ENCODE measurements at regions of chr9 and their contacts with region 1.

Region 1: DNA sequence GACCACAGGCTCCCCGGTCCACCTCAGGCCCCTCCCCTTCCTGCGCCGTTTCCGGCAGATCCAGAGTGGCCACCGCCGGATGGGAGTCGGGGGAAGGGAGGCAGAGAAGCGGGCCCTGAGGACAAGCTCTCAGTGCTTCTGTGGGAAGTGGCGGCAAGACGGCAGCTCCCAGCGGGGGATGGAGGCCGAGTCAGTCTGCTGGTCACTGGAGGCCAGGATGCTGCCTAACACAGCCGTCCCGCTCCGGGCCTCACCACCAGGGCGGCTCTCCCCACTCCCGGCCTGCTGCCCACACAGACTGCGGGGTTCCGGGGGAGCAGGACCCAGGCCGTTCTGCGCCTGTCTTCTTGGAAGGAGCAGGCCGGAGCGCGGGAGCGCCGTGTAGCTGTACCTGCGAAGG is 31.4 kb downstream of the FXN start:
- DNase-seq: no peak

Region 2: DNA sequence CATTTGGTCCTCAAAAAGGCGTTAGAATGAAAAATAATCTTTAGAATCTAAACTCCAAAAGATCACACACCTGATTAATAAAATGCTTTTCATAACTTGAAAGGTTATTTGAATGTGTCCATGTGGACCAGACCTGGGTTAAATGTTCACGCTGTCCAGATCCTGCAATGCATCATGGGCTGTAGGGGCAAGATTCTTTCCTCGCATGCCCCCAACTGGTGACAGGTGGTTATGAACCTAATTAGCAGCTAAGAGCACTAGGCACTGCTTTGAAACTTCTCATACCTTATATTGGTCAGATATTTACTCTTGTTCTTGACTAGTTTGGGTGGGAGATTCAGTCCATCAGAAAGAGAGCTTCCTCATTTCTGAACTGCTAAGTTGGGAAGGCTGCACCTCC is 381.2 kb before region 1 on chr9:
- intact Hi-C with region 1: no loop called
- DNase-seq: no peak

Region 3: GRCh38 chr9:68933434-68934328 is 133.3 kb before region 1 on chr9:
- intact Hi-C with region 1: no loop called
- DNase-seq: no peak

Region 4: DNA sequence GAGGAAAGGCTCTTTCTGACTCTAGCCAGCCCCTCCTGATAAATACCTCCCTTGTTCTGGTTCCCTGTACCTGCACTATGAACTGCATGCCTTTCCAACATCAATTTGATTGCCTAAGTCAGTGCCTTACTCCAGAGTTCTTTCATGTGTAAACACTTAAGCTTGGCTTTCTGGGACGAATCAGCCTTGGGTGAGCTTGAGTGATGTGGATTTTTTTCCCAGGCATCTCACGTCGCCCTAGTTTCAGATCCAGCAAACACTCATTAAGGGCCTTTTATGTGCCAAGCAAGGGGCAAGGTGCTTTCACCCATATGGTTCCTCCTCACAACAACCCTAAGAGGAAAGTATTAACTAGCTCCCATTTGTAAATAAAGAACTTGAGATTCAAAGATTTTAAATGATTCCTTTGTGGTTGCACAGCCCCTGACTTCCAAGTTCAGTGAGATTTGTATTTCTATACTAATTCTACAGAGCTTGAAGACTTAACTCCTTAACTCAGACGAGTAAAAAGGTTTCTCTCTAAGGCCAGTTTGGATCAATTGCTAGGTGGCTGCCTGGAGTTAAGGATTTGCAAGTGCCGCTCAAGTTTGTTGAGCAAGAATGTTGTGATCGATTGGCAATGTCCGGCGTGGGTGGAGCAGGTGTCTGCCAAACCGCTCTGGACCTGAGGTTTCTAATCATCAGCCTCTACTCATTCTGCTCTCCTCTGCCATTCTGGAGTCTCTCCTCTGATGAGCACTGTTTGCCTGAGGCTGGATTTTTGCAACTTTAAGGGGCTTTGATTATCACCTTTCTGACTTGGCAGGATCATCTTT is 87.0 kb after region 1 on chr9:
- intact Hi-C with region 1: loop called (anchors 5 kb)
- DNase-seq: no peak